CD4-positive, alpha-beta T cell (primary cell): ENCODE measurements at regions of chr22 and their contacts with region 1.

Region 1: DNA sequence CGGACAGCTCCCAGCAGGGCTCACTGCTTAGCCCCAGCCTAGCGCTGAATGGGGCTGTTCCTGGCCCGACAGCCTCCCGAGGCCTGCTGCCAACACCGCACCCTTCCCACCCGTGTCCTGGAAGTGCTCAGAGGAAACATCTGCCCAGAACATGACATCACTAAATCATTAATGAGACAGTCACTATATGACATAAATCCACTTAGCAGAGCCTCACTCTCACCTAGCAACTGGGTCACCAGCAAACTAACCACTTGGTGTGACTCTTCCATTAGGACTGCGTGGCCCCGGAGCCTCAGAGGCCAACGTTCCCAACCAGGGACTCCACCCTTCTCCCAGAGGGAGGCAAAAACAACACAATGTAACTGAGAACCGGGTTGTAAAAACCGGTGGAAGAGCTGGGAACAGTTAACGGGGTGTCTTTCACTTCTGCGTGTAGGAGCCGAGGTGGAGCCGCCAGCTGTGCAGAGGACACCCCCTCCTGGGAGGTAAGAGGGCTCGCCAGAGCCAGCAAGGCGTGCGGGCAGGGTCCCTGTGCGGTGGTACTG is 21.4 kb upstream of the PACSIN2 start:
- DNase-seq: no peak
- ATAC-seq: no peak
- H3K4me3 ChIP-seq: no peak overlapping the region
- H3K4me3 Mint-ChIP-seq: no peak overlapping the region
- H3K27ac ChIP-seq: no peak overlapping the region
- H3K27ac Mint-ChIP-seq: no peak overlapping the region
- H3K4me1 ChIP-seq: peaks cover 5% of the 10 kb centered on the region
- H3K4me1 Mint-ChIP-seq: peaks cover 6% of the 10 kb centered on the region
- H3K27me3 ChIP-seq: no peaks in the 10 kb centered on the region
- H3K27me3 Mint-ChIP-seq: no peaks in the 10 kb centered on the region
- CTCF ChIP-seq: no peak

Region 2: GRCh38 chr22:42662114-42663021 is 374.0 kb before region 1 on chr22:
- CTCF ChIA-PET with region 1: no interaction called
- POLR2A ChIA-PET with region 1: no interaction called
- intact Hi-C with region 1: loop called in 1 of 2 experiments (anchors 1 kb)
- DNase-seq: peak; percentile 67 to 89 (median 74)
- ATAC-seq: peak; percentile 93
- H3K4me3 ChIP-seq: peak overlapping the region; percentile 67
- H3K4me3 Mint-ChIP-seq: peak overlapping the region; percentile 30
- H3K27ac ChIP-seq: no peak overlapping the region
- H3K27ac Mint-ChIP-seq: no peak overlapping the region
- H3K4me1 ChIP-seq: peaks cover 15% of the 10 kb centered on the region
- H3K4me1 Mint-ChIP-seq: no peaks in the 10 kb centered on the region
- H3K27me3 ChIP-seq: no peaks in the 10 kb centered on the region
- H3K27me3 Mint-ChIP-seq: peaks cover 4% of the 10 kb centered on the region
- CTCF ChIP-seq: peak; percentile 91

Region 3: DNA sequence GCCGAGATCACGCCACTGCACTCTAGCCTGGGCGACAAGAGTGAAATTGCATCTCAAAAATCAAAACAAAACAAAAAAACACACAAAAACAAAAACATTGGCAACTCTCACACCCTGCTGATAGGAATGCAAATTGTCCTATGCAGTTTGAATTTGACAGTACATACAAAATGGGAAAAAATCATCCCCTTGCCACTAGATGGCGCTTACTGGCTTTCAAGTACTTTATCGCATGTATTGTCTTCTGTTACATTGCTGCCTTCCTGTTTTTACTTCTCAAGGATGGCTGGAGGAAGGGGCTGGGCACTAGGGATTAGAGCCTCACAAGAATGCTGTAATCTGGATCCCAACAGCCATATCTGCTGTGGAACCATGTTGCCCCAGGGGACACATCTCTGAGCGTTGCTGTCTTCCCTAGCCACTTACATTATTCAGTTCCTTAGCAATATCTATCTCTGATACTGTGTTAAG is 256.3 kb before region 1 on chr22:
- CTCF ChIA-PET with region 1: interaction called, 3 read pairs
- POLR2A ChIA-PET with region 1: no interaction called
- intact Hi-C with region 1: loop called (anchors 1 to 2 kb)
- DNase-seq: peak in 9 of 14 experiments; percentile 9 to 82 (median 32)
- ATAC-seq: peak; percentile 62
- H3K4me3 ChIP-seq: no peak overlapping the region
- H3K4me3 Mint-ChIP-seq: no peak overlapping the region
- H3K27ac ChIP-seq: no peak overlapping the region
- H3K27ac Mint-ChIP-seq: no peak overlapping the region
- H3K4me1 ChIP-seq: no peaks in the 10 kb centered on the region
- H3K4me1 Mint-ChIP-seq: no peaks in the 10 kb centered on the region
- H3K27me3 ChIP-seq: no peaks in the 10 kb centered on the region
- H3K27me3 Mint-ChIP-seq: no peaks in the 10 kb centered on the region
- CTCF ChIP-seq: peak; percentile 79

Region 4: GRCh38 chr22:42872821-42873220 is 163.5 kb before region 1 on chr22:
- CTCF ChIA-PET with region 1: no interaction called
- POLR2A ChIA-PET with region 1: no interaction called
- intact Hi-C with region 1: loop called in 1 of 2 experiments (anchors 5 kb)
- DNase-seq: no peak
- ATAC-seq: no peak
- H3K4me3 ChIP-seq: no peak overlapping the region
- H3K4me3 Mint-ChIP-seq: no peak overlapping the region
- H3K27ac ChIP-seq: no peak overlapping the region
- H3K27ac Mint-ChIP-seq: no peak overlapping the region
- H3K4me1 ChIP-seq: no peaks in the 10 kb centered on the region
- H3K4me1 Mint-ChIP-seq: no peaks in the 10 kb centered on the region
- H3K27me3 ChIP-seq: no peaks in the 10 kb centered on the region
- H3K27me3 Mint-ChIP-seq: no peaks in the 10 kb centered on the region
- CTCF ChIP-seq: no peak

Region 5: GRCh38 chr22:43066844-43067385 is 30.6 kb after region 1 on chr22:
- CTCF ChIA-PET with region 1: no interaction called
- POLR2A ChIA-PET with region 1: no interaction called
- intact Hi-C with region 1: no loop called
- DNase-seq: no peak
- ATAC-seq: no peak
- H3K4me3 ChIP-seq: no peak overlapping the region
- H3K4me3 Mint-ChIP-seq: no peak overlapping the region
- H3K27ac ChIP-seq: no peak overlapping the region
- H3K27ac Mint-ChIP-seq: no peak overlapping the region
- H3K4me1 ChIP-seq: no peaks in the 10 kb centered on the region
- H3K4me1 Mint-ChIP-seq: no peaks in the 10 kb centered on the region
- H3K27me3 ChIP-seq: no peaks in the 10 kb centered on the region
- H3K27me3 Mint-ChIP-seq: no peaks in the 10 kb centered on the region
- CTCF ChIP-seq: no peak